Adrenal gland (tissue), 19 donors: ENCODE measurements at regions of chr19 and their contacts with region 1.

Region 1: DNA sequence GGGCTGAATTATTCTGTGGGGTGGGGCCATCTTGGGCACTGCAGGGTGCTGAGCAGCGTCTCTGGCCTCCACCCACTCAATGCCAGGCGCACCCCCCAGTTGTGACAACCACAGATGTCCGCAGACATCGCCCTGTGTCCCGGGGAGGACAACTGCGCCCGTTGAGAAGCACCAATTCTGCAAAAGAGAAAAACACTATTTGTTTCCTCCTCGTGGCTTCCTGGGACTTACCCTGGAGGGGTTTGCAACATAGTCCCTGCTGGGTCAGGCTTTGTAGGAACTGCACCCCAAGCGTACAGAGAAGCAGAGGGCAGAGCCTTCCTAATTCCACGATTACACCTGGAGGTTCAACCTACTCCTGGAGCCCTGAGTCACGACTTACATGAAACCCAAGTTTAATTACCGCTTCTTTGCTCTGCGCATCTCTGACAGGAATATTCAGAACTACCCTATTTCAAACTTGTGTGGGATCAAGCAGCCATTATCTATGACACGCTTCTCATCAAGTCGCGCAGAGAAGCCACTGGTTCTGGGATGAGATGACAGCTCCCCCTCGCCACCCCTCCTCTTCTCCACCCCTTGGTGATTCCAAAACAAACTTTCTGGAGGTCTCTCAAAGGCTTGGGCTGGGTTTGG is 11.1 kb upstream of the SLC39A3 start:
- DNase-seq: no peak
- H3K4me3 ChIP-seq: no peak overlapping the region
- H3K27ac ChIP-seq: no peak overlapping the region
- H3K4me1 ChIP-seq: no peaks in the 10 kb centered on the region
- H3K27me3 ChIP-seq: no peaks in the 10 kb centered on the region
- CTCF ChIP-seq: no peak
- POLR2A ChIP-seq: no peak

Region 2: GRCh38 chr19:2653710-2654707 is 96.9 kb before region 1 on chr19:
- intact Hi-C with region 1: loop called (anchors 2 to 5 kb)
- DNase-seq: peak in 5 of 7 donors; percentile 63 to 78 (median 68)
- H3K4me3 ChIP-seq: peak overlapping the region in 1 of 4 donors; percentile 16
- H3K27ac ChIP-seq: no peak overlapping the region
- H3K4me1 ChIP-seq: peaks cover 14 to 17% of the 10 kb centered on the region in 2 donors
- H3K27me3 ChIP-seq: no peaks in the 10 kb centered on the region
- CTCF ChIP-seq: no peak
- POLR2A ChIP-seq: no peak